GM12878 (cell line): ENCODE measurements at regions of chr16 and their contacts with region 1.

Region 1: GRCh38 chr16:48365581-48366164 is 19.5 kb downstream of the SIAH1 start:
- DNase-seq: no peak
- ATAC-seq: peak; percentile 97
- H3K4me3 ChIP-seq: peak overlapping the region; percentile 64
- H3K27ac ChIP-seq: peak overlapping the region; percentile 90
- H3K4me1 ChIP-seq: peaks cover 14% of the 10 kb centered on the region
- H3K27me3 ChIP-seq: no peaks in the 10 kb centered on the region
- CTCF ChIP-seq: no peak
- EP300 ChIP-seq: no peak
- POLR2A ChIP-seq: peak; percentile 73
- RAD21 ChIP-seq: no peak

Region 2: GRCh38 chr16:48353565-48354163 is 12.0 kb before region 1 on chr16:
- CTCF ChIA-PET with region 1: interaction called, 13 read pairs
- POLR2A ChIA-PET with region 1: interaction called, 3 read pairs
- RAD21 ChIA-PET with region 1: interaction called, 4 read pairs
- SMC1A ChIA-PET with region 1: interaction called, 52 read pairs
- in situ Hi-C with region 1: no loop called
- intact Hi-C with region 1: no loop called
- DNase-seq: peak; percentile 37
- ATAC-seq: peak; percentile 94
- H3K4me3 ChIP-seq: no peak overlapping the region
- H3K27ac ChIP-seq: no peak overlapping the region
- H3K4me1 ChIP-seq: peaks cover 5% of the 10 kb centered on the region
- H3K27me3 ChIP-seq: no peaks in the 10 kb centered on the region
- CTCF ChIP-seq: peak; percentile 86 to 93 (median 91)
- EP300 ChIP-seq: no peak
- POLR2A ChIP-seq: no peak
- RAD21 ChIP-seq: peak; percentile 88

Region 3: GRCh38 chr16:48385272-48386150 is 19.8 kb after region 1 on chr16 and contains the start of gene SIAH1:
- CTCF ChIA-PET with region 1: interaction called, 14 read pairs
- POLR2A ChIA-PET with region 1: interaction called, 9 read pairs
- RAD21 ChIA-PET with region 1: interaction called, 30 read pairs
- SMC1A ChIA-PET with region 1: interaction called, 112 read pairs
- in situ Hi-C with region 1: no loop called
- intact Hi-C with region 1: loop called (anchors 2 kb)
- DNase-seq: no peak
- ATAC-seq: peak; percentile 73
- H3K4me3 ChIP-seq: peak within 1 kb of the TSS; percentile 93
- H3K27ac ChIP-seq: peak within 1 kb of the TSS; percentile 83
- H3K4me1 ChIP-seq: no peaks in the 10 kb centered on the region; the same call in 1 of the 2 replicates
- H3K27me3 ChIP-seq: no peaks in the 10 kb centered on the region
- CTCF ChIP-seq: no peak
- EP300 ChIP-seq: no peak
- POLR2A ChIP-seq: peak; percentile 96
- RAD21 ChIP-seq: no peak
- polyA plus RNA-seq, gene SIAH1: 5.1 to 6.4 TPM

Region 4: DNA sequence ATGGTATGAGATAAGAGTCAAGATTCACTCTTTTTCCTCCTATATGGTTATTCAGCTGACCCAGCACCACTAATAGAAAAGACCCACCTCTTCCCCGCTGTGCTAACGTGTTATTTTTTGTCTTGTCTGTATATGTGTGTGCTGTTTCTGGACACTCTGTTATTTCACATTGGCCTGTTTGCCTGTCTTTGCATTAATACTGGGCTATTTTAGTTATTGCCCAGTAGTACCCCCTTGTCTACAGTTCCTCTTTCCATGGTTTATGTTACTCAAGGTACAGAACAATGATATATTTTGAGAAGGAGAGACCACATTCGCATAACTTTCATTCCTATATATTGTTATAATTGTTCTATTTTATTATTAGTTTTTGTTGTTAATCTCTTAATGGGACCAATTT is 93.5 kb after region 1 on chr16:
- CTCF ChIA-PET with region 1: interaction called, 4 read pairs
- POLR2A ChIA-PET with region 1: no interaction called
- RAD21 ChIA-PET with region 1: interaction called, 14 read pairs
- SMC1A ChIA-PET with region 1: interaction called, 4 read pairs
- in situ Hi-C with region 1: no loop called
- intact Hi-C with region 1: loop called (anchors 5 kb)
- DNase-seq: peak; percentile 27
- ATAC-seq: peak; percentile 75
- H3K4me3 ChIP-seq: no peak overlapping the region
- H3K27ac ChIP-seq: peak overlapping the region; percentile 57
- H3K4me1 ChIP-seq: peaks cover 23% of the 10 kb centered on the region
- H3K27me3 ChIP-seq: no peaks in the 10 kb centered on the region
- CTCF ChIP-seq: no peak
- EP300 ChIP-seq: no peak; a peak in 1 of 4 replicates
- POLR2A ChIP-seq: no peak
- RAD21 ChIP-seq: no peak

Region 5: DNA sequence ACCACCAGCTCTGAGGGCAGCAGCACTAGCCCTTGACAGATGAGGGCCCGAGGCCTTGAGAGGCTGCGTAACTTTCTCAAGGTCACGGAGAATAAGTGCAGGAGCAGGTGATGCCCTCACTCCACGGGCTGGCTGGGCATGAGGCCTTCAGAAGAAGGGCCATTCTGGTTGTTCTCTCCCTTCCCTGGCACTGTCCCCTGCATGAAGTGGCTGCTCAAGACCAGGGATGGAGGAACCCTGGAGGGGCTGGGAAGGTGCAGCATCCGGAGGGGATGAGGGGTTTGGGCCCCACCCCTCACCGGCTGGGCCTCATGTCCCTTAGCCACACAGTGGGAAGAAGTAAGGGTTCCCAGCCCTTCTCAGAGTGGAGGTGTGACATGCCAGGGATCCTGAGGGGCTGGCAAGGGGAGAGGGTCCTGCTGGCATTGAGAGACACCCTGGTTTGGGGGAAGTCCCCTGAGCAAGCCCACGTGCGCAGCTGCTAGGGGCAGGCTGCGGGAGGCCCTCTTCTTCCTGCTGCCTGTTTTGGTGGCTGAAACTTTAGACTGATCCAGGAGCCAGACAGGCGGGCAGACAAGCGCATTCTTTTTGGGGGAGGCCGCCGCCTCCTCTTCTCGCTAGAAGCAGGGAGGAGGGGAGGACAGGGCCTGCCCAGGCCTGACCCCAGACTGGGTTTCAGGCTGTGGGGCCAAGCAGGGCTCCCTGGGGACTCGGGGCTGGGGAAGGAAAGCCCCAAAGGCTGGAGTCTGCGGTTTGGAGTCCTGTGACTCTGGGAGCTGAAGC is 170.3 kb after region 1 on chr16:
- CTCF ChIA-PET with region 1: interaction called, 5 read pairs
- POLR2A ChIA-PET with region 1: no interaction called
- RAD21 ChIA-PET with region 1: interaction called, 4 read pairs
- SMC1A ChIA-PET with region 1: interaction called, 3 read pairs
- in situ Hi-C with region 1: no loop called
- intact Hi-C with region 1: loop called (anchors 5 kb)
- DNase-seq: peak; percentile 72
- ATAC-seq: peak; percentile 85
- H3K4me3 ChIP-seq: no peak overlapping the region
- H3K27ac ChIP-seq: peak overlapping the region; percentile 73
- H3K4me1 ChIP-seq: peaks cover 24% of the 10 kb centered on the region
- H3K27me3 ChIP-seq: no peaks in the 10 kb centered on the region
- CTCF ChIP-seq: no peak
- EP300 ChIP-seq: peak; percentile 71 to 76; a peak in 3 of 4 replicates
- POLR2A ChIP-seq: no peak; the same call in 1 of the 2 replicates
- RAD21 ChIP-seq: 0 out of 2 replicates have a peak, but pooled peaks have one; percentile 7

Region 6: DNA sequence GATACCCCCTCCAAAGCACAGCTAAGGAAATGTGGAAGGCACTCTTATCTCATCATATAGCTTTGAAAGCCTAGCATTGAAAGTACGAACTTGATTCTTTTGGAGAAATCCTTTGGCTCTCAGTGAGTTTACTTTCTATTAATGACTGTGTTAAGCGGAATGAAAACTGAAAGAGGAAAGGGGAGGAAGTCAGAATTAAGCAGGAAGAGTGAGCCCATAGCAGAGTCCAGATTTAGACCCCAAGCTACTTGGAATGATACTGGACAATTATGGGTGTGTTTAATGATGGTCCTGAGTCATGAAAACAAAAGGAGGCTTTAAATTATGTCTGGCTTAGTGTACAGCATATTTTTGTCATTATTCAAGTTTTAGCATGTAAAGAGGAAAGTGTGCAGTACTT is 1829.6 kb after region 1 on chr16:
- CTCF ChIA-PET with region 1: no interaction called
- POLR2A ChIA-PET with region 1: no interaction called
- RAD21 ChIA-PET with region 1: no interaction called
- SMC1A ChIA-PET with region 1: no interaction called
- in situ Hi-C with region 1: no loop called
- intact Hi-C with region 1: no loop called
- DNase-seq: no peak
- ATAC-seq: peak; percentile 12
- H3K4me3 ChIP-seq: peak overlapping the region; percentile 43; the same call in 1 of the 2 replicates
- H3K27ac ChIP-seq: peak overlapping the region; percentile 75
- H3K4me1 ChIP-seq: peaks cover 42% of the 10 kb centered on the region
- H3K27me3 ChIP-seq: no peaks in the 10 kb centered on the region
- CTCF ChIP-seq: no peak
- EP300 ChIP-seq: no peak
- POLR2A ChIP-seq: no peak
- RAD21 ChIP-seq: no peak